ENCODE measurements at regions of chr6 and their contacts with region 1.

Region 1: GRCh38 chr6:88870717-88871330 is 92.6 kb downstream of the RNGTT start:
- DNase-seq: peak in 3 of 10 donors; percentile 8 to 33 (median 11)

Region 2: GRCh38 chr6:87066449-87067333 is 1804.1 kb before region 1 on chr6:
- intact Hi-C with region 1: loop called (anchors 5 kb)
- DNase-seq: peak in 4 of 10 donors; percentile 12 to 45 (median 27)

Region 3: DNA sequence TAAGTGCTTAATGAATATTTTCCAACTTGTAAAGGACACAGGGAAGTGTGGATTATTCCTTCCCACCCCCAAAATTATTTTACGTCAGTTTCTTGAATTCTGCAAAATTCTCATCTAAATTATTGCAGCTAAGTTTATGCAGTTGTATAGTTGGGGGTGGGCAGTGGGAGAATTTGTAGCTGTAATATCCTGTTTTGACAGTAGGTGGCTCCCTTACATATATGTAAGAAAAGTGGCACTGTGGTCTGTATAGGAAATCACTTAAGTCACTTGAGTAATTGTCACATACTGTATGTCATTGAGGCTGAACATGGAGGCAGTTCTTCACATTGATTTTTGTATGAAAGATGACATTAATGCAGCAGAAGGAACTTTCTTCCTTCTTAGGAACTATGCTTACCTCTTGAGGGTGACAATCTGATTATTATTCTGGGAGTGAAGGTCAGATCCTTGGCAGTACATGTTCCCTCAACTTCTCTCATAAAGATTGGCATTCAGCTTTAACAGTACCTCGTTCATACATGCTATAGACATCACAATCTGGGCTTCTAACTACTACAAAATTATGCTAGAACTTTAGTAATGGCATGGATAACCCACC is 1477.7 kb before region 1 on chr6:
- intact Hi-C with region 1: loop called (anchors 5 kb)
- DNase-seq: no peak

Region 4: GRCh38 chr6:87832025-87832825 is 1038.6 kb before region 1 on chr6:
- intact Hi-C with region 1: loop called (anchors 10 kb)
- DNase-seq: no peak

Region 5: DNA sequence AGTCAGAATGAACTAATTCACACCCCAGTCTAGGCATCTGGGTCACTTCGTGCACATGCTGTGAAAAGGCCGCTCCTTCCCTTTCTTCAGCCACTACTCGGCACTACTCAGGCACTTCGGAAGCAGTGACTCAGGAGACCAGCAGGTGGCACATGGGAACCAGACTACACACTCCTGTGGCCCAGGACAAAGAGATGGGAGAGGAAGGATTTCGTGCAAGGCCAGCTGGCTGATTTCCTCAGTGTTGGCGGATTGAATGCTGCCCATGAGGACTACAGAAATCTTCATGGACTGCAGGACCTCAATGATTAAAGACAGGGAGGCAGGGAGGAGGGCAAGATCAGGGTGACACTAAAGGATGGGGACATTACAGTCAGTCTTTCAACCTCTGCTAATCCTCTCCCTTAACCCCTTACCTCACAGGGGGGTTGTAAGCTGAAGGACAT is 941.0 kb before region 1 on chr6:
- intact Hi-C with region 1: loop called (anchors 5 kb)
- DNase-seq: peak; percentile 70 to 97 (median 82)